Activated T-helper 2 cell treated with anti-CD3 and anti-CD28 coated beads, Interferon-gamma antibody, Interleukin-2, Interleukin-4, amounts not matched to agents 10 μg/mL and 5 μg/mL and 100 μg/mL, durations not matched to agents 14 hours and 24 hours and 36 hours (primary cell): ENCODE measurements at regions of chrX and their contacts with region 1.

Region 1: DNA sequence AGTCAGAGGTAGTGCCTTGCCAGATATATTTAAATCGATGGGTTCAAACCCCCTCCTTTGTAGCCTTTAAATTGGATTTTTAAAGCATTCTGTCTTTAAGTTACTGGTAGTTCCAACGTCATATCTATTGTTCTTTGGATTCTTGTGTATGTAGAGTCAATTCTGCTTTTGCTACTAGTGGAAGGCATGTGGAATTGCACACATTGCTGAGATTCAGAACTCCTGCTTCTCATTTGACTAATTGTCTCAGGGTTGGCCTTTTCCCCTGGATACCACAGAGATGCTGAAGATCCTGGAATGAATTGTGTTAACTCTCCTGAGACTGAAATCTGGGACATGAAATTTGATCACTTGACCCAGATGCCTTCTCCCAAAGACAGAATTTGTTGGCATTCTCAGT is 328.3 kb upstream of the RPS6KA3 start:
- DNase-seq: no peak
- H3K4me3 Mint-ChIP-seq: no peak overlapping the region
- H3K27ac Mint-ChIP-seq: no peak overlapping the region
- H3K4me1 Mint-ChIP-seq: peaks cover 24% of the 10 kb centered on the region
- H3K27me3 Mint-ChIP-seq: no peaks in the 10 kb centered on the region

Region 2: DNA sequence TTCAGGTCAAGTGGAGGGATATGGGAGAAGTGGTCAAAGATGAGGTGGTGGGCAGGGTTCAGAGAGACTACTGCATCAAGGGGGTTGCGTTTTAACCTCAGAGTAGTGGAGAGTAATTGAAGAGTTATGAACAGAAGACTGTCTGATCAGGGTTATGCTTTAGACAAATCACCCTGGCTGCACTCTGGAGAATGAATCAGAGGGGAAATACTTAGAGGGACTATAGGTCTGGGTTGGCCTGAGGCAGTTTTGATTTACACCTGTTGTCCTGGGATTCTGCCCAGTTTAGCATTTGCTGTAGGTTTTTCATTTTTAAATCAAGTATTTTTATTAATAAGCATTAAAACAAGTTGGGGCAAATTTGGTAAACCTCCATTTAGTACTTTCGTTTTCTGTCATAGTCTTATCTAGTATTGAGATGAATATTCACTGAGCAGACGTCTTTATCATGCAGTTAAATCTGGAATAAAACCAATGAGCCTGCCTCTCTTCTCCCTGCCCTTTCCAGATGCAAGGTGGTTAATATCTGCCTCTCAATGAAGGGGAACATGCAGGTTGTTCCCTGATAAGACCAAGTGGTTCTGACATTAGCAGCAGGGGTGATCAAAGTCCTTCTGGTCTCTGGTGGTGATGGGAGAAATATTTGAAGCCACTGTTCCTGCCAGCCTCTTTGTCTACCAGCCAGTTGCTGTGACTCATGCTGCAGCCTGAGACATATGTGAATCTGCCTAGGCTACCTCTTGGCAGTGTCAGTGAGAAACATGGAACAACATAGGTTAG is 212.3 kb before region 1 on chrX:
- intact Hi-C with region 1: loop called (anchors 2 kb)
- DNase-seq: peak; percentile 9
- H3K4me3 Mint-ChIP-seq: no peak overlapping the region
- H3K27ac Mint-ChIP-seq: peak overlapping the region; percentile 65
- H3K4me1 Mint-ChIP-seq: peaks cover 25% of the 10 kb centered on the region
- H3K27me3 Mint-ChIP-seq: no peaks in the 10 kb centered on the region